Dendritic cell treated with granulocyte-macrophage colony-stimulating factor and Interleukin-4, amounts not matched to agents 40 ng/mL and 50 ng/mL, for 4 days (primary cell): ENCODE measurements at regions of chr10 and their contacts with region 1.

Region 1: DNA sequence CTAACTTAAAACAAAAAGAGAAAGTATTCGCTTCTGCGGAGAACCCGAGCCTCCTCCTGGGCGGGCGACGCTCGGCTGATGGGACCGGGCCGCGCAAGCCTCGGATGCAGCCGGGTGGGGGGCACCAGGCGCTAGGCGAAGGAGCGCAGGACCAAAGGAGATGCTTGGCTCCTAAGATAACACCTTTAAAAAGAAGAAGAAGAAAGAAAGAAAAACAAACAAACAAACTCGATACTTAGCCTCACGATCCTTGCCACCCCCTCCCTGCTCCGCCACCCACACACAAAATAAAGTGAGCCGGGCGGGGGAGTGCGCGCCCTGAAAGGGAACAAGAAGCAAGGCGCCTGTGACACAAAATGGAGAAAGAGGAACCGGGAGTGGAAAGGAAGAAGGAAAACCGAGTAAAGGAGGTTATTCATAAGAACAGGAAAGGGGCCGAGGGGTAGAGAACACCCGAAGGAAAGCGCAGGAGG is 34.0 kb upstream of the EBLN1 start:
- H3K4me3 Mint-ChIP-seq: peak overlapping the region; percentile 93
- H3K27ac Mint-ChIP-seq: peak overlapping the region; percentile 99
- H3K4me1 Mint-ChIP-seq: peaks cover 17% of the 10 kb centered on the region
- H3K27me3 Mint-ChIP-seq: no peaks in the 10 kb centered on the region

Region 2: GRCh38 chr10:22003079-22003913 is 248.5 kb before region 1 on chr10 and contains the start of gene DNAJC1:
- intact Hi-C with region 1: loop called (anchors 2 kb)
- H3K4me3 Mint-ChIP-seq: peak within 1 kb of the TSS; percentile 90
- H3K27ac Mint-ChIP-seq: peak within 1 kb of the TSS; percentile 87
- H3K4me1 Mint-ChIP-seq: peaks cover 23% of the 10 kb centered on the region
- H3K27me3 Mint-ChIP-seq: no peaks in the 10 kb centered on the region

Region 3: GRCh38 chr10:22228943-22229801 is 22.6 kb before region 1 on chr10:
- intact Hi-C with region 1: loop called (anchors 1 kb)
- H3K4me3 Mint-ChIP-seq: peak overlapping the region; percentile 76
- H3K27ac Mint-ChIP-seq: peak overlapping the region; percentile 86
- H3K4me1 Mint-ChIP-seq: peaks cover 10% of the 10 kb centered on the region
- H3K27me3 Mint-ChIP-seq: peaks cover 2% of the 10 kb centered on the region

Region 4: DNA sequence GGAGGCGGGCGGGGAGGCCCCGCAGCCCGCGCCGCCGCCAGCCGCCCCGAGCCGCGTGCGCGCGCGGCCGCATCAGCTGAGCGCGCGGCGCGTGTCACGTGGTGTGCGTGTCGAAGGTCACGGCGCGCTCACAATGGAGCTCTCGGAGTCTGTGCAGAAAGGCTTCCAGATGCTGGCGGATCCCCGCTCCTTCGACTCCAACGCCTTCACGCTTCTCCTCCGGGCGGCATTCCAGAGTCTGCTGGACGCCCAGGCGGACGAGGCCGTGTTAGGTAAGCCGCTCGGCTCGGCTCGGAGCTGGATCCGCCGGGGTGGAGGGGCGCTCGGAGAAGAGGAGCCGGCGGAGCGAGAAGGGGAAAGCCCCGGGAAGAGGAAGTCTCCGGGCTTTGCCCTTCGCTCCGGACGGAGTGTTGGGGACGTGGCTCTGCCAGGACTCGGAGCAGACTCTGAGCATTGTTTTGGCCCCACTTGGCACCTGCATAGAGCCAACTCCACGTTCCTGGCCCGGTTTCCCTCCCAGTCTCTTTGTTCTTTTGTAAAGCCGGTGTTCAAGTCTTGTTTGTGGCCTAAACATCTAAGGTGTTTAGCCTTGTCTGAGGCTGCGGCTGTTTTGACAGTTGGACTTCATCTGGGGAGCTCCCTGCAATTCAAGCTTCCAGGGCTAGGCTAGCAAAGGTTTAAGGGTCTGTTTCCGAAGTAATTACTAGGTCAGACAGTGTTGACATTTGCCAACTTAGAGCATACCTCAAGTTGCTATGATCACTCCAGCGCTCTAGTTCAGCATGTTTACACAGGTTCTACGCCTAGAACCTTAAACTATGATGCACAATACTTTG is 64.7 kb after region 1 on chr10 and contains the start of gene COMMD3:
- intact Hi-C with region 1: loop called (anchors 2 kb)
- H3K4me3 Mint-ChIP-seq: peak within 1 kb of the TSS; percentile 94
- H3K27ac Mint-ChIP-seq: peak within 1 kb of the TSS; percentile 95
- H3K4me1 Mint-ChIP-seq: peaks cover 6% of the 10 kb centered on the region
- H3K27me3 Mint-ChIP-seq: no peaks in the 10 kb centered on the region

Region 5: DNA sequence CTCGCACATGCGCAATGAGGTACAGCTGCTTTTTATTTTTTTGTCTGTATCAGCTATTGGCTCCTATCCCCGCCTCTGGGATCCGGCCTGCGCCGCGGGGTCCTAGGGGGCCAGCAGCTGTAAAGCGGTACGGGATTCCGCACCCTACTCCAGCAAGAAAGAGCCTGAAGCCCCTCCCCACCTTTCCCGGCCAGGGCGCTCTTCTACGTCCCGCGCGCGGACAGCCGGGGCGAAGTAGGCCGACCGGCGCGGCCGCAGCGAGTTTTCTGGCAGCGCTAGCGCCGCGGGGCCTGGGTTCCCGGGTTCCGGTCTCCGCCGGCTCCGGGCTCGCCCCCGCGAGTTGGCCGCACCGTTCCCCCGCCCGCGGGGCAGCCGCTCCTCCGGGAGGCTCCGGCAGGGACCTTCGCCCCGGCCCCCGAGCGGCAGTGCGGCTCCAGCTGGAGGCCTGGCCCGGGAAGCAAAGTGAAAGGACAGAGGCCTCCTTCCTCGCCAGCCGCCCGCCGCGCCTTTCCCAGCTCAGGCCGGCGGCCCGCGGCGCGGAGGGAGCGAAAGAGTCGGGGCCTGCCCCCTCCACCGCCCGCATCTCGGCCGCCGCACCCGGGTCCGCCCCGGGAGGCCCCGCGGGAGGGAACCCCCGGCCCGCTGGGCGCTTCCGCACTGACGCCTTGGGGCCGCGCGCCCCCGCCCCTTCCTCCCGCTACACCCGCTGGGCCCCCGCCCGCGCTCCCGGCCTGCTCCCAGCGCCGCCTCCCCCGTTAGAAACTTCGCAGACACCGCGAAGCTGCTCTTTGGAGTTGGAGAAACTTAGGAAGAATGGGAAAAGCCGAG is 88.8 kb after region 1 on chr10:
- intact Hi-C with region 1: loop called (anchors 2 kb)
- H3K4me3 Mint-ChIP-seq: peak overlapping the region; percentile 84
- H3K27ac Mint-ChIP-seq: peak overlapping the region; percentile 89
- H3K4me1 Mint-ChIP-seq: peaks cover 30% of the 10 kb centered on the region
- H3K27me3 Mint-ChIP-seq: peaks cover 73% of the 10 kb centered on the region

Region 6: DNA sequence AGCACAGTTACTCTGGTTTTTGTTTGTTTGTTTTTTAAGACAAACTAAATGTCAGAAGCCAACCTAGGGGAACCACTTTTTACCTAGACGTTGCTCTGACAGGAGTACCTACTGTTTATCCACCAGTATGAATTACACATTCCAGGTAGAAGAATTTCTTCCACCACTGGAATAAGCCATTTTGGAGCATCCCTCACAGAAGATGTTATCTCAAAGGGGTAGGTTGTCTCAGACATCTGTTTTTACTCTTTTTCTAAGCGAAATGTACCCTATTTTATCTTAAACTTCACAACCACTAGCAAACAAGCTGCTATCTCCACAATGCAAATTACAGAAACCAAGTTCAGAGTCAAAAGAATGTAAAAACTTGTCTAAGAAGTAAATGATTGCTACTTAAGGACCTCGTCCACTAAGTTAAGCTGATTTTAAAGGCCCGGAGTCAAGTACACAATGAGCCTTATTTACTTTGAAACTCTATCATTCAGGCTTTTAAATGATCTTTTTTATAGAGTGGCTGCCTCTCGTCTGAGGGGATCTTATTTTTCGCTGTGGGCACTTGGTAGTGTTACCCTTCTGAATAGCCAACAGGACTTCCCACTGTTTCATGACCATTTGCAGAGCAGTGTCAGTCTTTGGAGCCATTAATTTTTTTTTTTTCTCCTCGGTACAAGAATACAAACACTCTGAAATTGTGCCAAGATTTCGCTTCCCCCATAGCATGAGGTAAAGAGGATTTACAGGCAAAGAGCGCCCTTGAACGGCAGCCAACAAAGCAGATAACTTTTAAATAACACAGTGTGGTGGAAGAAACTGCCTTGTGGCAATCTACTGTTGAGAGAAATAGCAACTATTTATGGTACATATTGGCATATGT is 660.3 kb after region 1 on chr10:
- intact Hi-C with region 1: no loop called
- H3K4me3 Mint-ChIP-seq: no peak overlapping the region
- H3K27ac Mint-ChIP-seq: no peak overlapping the region
- H3K4me1 Mint-ChIP-seq: no peaks in the 10 kb centered on the region
- H3K27me3 Mint-ChIP-seq: peaks cover 2% of the 10 kb centered on the region